ENCODE measurements at regions of chr7 and their contacts with region 1.

Region 1: GRCh38 chr7:154927624-154928143 is 75.2 kb downstream of the PAXIP1 start:
- DNase-seq: peak; percentile 87
- ATAC-seq: peak; percentile 66
- H3K4me3 ChIP-seq: peak overlapping the region; percentile 62 to 63
- H3K27ac ChIP-seq: no peak overlapping the region
- H3K4me1 ChIP-seq: peaks cover 4 to 15% of the 10 kb centered on the region in 2 experiments; a peak in 2 of 4 replicates
- H3K27me3 ChIP-seq: 0 out of 2 replicates have a peak, but pooled peaks cover 4% of the 10 kb centered on the region
- CTCF ChIP-seq: peak; percentile 57 to 87 (median 81)
- POLR2A ChIP-seq: no peak
- RAD21 ChIP-seq: peak; percentile 91

Region 2: GRCh38 chr7:154953006-154953684 is 25.5 kb after region 1 on chr7:
- CTCF ChIA-PET with region 1: interaction called, 12 read pairs
- POLR2A ChIA-PET with region 1: no interaction called
- RAD21 ChIA-PET with region 1: no interaction called
- intact Hi-C with region 1: no loop called
- DNase-seq: peak; percentile 24
- ATAC-seq: peak; percentile 80
- H3K4me3 ChIP-seq: no peak overlapping the region
- H3K27ac ChIP-seq: no peak overlapping the region
- H3K4me1 ChIP-seq: no peaks in the 10 kb centered on the region
- H3K27me3 ChIP-seq: no peaks in the 10 kb centered on the region
- CTCF ChIP-seq: peak; percentile 43 to 85 (median 77); a peak in 5 of 6 replicates
- POLR2A ChIP-seq: no peak
- RAD21 ChIP-seq: peak; percentile 36

Region 3: GRCh38 chr7:155190688-155191087 is 263.0 kb after region 1 on chr7:
- CTCF ChIA-PET with region 1: interaction called, 5 read pairs
- POLR2A ChIA-PET with region 1: no interaction called
- RAD21 ChIA-PET with region 1: no interaction called
- intact Hi-C with region 1: loop called (anchors 2 kb)
- DNase-seq: no peak
- ATAC-seq: peak; percentile 94
- H3K4me3 ChIP-seq: no peak overlapping the region
- H3K27ac ChIP-seq: no peak overlapping the region
- H3K4me1 ChIP-seq: peaks cover 0 to 3% of the 10 kb centered on the region in 2 experiments; a peak in 1 of 4 replicates
- H3K27me3 ChIP-seq: no peaks in the 10 kb centered on the region
- CTCF ChIP-seq: peak; percentile 82 to 88 (median 84)
- POLR2A ChIP-seq: no peak
- RAD21 ChIP-seq: peak; percentile 96

Region 4: GRCh38 chr7:155356323-155357105 is 428.8 kb after region 1 on chr7:
- CTCF ChIA-PET with region 1: interaction called, 21 read pairs
- POLR2A ChIA-PET with region 1: no interaction called
- RAD21 ChIA-PET with region 1: no interaction called
- intact Hi-C with region 1: loop called (anchors 1 kb)
- DNase-seq: peak; percentile 31
- ATAC-seq: peak; percentile 87
- H3K4me3 ChIP-seq: no peak overlapping the region
- H3K27ac ChIP-seq: no peak overlapping the region
- H3K4me1 ChIP-seq: no peaks in the 10 kb centered on the region
- H3K27me3 ChIP-seq: peaks cover 8% of the 10 kb centered on the region; the same call in 1 of the 2 replicates
- CTCF ChIP-seq: peak; percentile 55 to 66 (median 66)
- POLR2A ChIP-seq: no peak
- RAD21 ChIP-seq: peak; percentile 63

Measured in HCT116 (cell line).